BJ (cell line): ENCODE measurements at regions of chr6 and their contacts with region 1.

Region 1: GRCh38 chr6:30600451-30600961 is 16.5 kb downstream of the PPP1R10 start:
- DNase-seq: no peak
- H3K4me3 ChIP-seq: no peak overlapping the region
- H3K27me3 ChIP-seq: no peaks in the 10 kb centered on the region
- CTCF ChIP-seq: no peak

Region 2: GRCh38 chr6:30748851-30749558 is 148.5 kb after region 1 on chr6:
- CTCF ChIA-PET with region 1: no interaction called
- POLR2A ChIA-PET with region 1: interaction called, 27 read pairs
- DNase-seq: no peak
- H3K4me3 ChIP-seq: no peak overlapping the region
- H3K27me3 ChIP-seq: no peaks in the 10 kb centered on the region
- CTCF ChIP-seq: no peak